Left colon (tissue), 2 donors: ENCODE measurements at regions of chr10 and their contacts with region 1.

Region 1: GRCh38 chr10:86585037-86585725 is 63.6 kb upstream of the WAPL start:
- DNase-seq: peak; percentile 43 to 72
- ATAC-seq: peak; percentile 96

Region 2: DNA sequence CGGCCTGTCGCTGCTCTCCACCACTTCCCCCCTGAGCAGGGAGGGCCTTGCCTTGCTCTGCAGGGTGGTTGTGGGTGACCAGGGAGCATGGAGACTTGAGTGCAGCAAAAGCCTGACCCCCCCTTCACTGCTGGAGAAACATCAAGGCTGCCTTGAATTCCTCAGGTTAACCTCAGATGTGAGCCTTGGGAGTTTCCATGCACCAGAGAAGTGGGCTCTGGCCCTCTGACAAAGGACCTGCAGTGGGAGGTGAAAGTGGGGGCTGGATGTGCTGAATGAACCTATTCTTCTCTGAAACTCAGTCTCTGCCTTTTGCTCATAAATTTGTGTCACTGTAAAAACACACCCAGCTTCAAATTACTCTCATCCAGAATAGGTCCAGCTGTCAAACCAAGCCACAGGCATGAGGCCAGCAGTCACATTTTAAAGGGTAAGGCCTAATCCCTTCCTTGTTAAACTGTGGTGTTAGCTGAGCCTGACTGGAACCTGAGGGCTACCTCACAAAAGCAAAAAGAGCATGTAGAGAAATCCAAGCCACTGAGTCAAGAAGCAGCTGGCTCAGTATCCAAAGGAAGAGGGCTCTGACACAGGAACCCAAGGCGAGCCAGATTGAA is 1900.0 kb before region 1 on chr10:
- intact Hi-C with region 1: no loop called
- DNase-seq: no peak
- ATAC-seq: no peak

Region 3: DNA sequence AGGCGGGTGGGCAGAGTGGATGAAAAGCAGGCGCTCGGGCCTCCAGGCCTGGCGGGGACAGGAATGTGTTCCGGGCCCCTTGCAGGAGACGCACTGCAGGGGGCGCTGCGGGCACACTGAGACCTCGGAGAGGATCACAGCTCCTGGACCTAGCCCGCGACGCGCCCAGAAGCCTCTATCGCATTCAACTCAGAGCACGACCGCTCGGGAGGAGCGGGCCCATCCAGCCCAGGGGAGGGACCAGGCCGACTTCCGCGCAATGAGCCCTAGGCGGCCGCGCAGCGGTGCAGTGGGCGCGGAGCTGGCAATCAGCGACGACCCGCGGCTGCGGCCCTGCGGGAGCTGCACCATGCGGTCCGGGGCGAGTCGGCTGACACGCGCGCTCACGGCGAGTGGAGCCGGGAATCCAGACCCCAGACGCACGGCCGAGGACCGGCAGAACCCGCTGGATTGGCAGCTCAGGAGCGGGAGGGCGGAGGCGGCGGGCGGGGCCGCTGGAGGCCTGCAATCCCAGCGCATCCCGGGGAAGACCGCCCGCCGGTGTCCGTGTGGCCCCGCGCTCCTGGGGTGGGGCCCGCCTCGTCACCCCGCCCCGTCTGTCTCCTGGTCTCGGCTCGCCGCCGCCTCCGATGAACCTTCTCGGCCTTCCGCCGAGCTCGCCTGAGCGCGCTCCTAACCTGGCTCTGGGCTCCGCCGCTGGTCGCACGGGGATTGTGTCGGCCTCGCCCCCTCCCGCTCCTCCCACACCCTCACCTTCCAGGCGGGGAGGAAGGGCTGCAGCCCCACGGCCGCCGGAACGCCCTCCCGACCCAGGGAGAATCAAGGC is 185.1 kb before region 1 on chr10:
- intact Hi-C with region 1: loop called (anchors 5 to 10 kb)
- DNase-seq: peak; percentile 94 to 98
- ATAC-seq: peak; percentile 86

Region 4: DNA sequence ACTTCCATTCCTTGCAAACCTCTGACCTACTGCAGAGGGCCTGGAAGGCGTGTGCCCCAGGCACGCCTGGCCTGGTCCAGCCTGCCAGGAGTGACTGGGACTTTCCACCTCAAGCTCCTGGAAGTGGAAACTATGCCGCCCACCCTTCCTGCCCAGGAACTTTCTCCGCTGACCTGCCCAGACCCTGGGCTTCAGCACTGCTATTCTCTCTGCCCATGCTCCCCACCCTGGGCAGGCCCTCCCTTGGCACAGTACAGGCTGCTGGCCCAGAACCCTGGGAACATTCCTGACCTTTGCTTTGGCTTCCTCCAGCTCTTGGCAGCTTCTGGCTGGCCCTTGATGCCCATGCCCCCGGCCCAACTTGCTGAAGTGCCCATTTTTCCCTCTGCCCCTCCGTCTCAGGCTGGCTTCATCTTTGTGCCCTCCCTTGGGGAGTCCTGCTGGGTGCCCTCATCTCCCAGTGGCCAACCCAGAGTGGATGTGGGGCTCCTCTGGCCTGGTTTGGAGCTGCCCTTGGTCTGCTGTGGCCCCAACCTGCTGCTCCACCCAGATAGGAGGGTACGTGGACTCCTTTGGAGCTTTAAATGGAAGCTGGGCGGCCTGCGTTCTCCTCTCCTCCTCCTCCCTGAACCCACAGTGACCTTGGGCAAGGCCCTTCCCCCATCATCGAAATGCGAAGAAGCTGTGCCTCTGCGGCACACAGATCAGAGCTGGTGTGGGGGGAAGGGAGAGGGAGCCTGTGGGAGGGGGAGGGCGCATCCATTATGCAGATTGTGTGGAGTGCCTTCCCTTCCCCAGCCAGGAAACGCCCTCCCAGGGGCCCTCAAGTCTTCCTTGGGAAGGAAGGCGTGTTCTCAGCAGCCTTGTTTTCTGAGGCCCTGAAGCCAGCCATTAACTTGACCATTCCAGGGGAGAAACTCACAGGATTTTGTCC is 368.8 kb after region 1 on chr10:
- intact Hi-C with region 1: no loop called
- DNase-seq: peak in 1 of 2 donors; percentile 28
- ATAC-seq: peak; percentile 80

Region 5: GRCh38 chr10:87531908-87532622 is 946.9 kb after region 1 on chr10:
- intact Hi-C with region 1: no loop called
- DNase-seq: no peak
- ATAC-seq: peak; percentile 42